Transverse colon (tissue), 4 donors: ENCODE measurements at regions of chr16 and their contacts with region 1.

Region 1: DNA sequence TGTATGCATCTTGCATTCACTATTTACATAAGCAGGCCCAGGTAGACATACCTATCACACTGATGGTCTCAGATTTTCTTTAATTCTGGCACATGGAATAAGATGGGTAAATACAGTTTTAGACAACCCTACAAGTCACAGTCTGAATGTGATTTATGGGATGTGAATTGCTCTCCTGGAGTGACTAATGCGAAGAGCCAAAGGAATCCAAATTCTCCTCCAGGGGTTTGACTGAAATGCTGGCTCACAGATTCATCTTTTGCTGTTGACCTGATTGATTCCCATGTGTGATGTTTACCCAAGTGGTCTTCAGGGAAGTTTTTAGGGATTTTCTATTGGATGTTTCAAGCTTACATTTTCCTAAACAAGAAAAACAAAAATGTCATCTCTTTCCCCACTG is 277.9 kb upstream of the MON1B start:
- DNase-seq: no peak
- H3K4me3 ChIP-seq: no peak overlapping the region
- H3K27ac ChIP-seq: no peak overlapping the region
- H3K4me1 ChIP-seq: no peaks in the 10 kb centered on the region
- H3K27me3 ChIP-seq: no peaks in the 10 kb centered on the region
- CTCF ChIP-seq: no peak
- EP300 ChIP-seq: no peak
- POLR2A ChIP-seq: no peak

Region 2: GRCh38 chr16:76668207-76668725 is 244.8 kb before region 1 on chr16:
- in situ Hi-C with region 1: no loop called
- intact Hi-C with region 1: no loop called
- DNase-seq: no peak
- H3K4me3 ChIP-seq: no peak overlapping the region
- H3K27ac ChIP-seq: no peak overlapping the region
- H3K4me1 ChIP-seq: no peaks in the 10 kb centered on the region
- H3K27me3 ChIP-seq: no peaks in the 10 kb centered on the region
- CTCF ChIP-seq: no peak
- EP300 ChIP-seq: no peak
- POLR2A ChIP-seq: no peak

Region 3: DNA sequence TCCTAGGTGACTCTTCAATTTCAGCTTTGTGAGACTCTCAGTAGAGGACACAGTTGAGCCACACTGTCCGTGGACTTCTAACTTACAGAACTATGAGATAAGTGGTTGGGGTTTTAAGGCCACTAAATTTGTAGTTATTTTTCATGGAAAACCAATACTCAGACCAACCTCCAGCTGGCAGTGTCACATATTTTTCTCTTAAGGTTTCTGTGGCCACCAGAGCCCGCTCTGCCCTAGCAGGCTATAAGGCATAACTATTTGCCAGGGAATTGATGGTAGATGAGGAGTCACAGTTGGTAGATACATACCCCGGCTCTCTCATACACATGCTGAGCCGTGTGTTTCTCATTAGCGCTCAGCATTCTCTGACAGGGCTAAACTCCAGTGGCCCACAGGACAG is 58.8 kb before region 1 on chr16:
- in situ Hi-C with region 1: no loop called
- intact Hi-C with region 1: no loop called
- DNase-seq: no peak
- H3K4me3 ChIP-seq: no peak overlapping the region
- H3K27ac ChIP-seq: no peak overlapping the region
- H3K4me1 ChIP-seq: no peaks in the 10 kb centered on the region
- H3K27me3 ChIP-seq: no peaks in the 10 kb centered on the region
- CTCF ChIP-seq: no peak
- EP300 ChIP-seq: no peak
- POLR2A ChIP-seq: no peak

Region 4: DNA sequence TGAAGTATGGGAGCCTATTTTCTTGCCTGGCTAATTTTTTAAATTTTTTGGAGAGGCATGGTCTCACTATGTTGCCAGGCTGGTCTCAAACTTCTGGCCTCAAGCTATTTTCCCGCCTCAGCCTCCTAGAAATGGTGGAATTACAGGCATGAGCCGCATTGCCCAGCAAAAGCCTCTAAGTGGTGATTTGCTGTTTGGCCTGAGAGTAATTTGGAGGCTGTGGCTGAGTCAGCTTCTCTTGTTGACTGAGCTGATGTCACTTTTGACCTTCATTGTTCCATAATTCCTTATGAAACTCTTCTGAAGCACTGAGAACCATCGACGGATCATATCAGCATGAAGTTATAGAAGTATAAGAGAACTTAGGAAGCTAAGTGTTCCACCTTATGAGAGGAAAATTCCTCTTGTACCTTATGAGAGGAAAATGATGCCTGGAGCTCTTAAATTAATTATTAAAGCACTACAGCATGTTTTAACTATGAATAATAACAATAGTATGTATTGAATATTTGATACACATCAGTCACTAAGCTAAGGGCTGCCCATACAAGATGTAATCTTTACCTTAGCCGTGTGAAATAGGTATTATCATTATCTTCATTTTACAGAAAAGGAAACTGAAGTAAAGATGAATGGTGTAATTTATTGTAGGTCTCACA is 57.2 kb after region 1 on chr16:
- in situ Hi-C with region 1: no loop called
- intact Hi-C with region 1: loop called (anchors 2 kb)
- DNase-seq: no peak
- H3K4me3 ChIP-seq: no peak overlapping the region
- H3K27ac ChIP-seq: no peak overlapping the region
- H3K4me1 ChIP-seq: no peaks in the 10 kb centered on the region
- H3K27me3 ChIP-seq: no peaks in the 10 kb centered on the region
- CTCF ChIP-seq: no peak
- EP300 ChIP-seq: no peak
- POLR2A ChIP-seq: no peak